Psoas muscle (tissue), 8 donors: ENCODE measurements at regions of chr1 and their contacts with region 1.

Region 1: GRCh38 chr1:176577646-176578197 is 114.7 kb downstream of the PAPPA2 start:
- DNase-seq: no peak
- ATAC-seq: no peak
- H3K4me3 ChIP-seq: no peak overlapping the region
- H3K27ac ChIP-seq: no peak overlapping the region
- H3K4me1 ChIP-seq: no peaks in the 10 kb centered on the region
- H3K27me3 ChIP-seq: no peaks in the 10 kb centered on the region
- CTCF ChIP-seq: no peak

Region 2: DNA sequence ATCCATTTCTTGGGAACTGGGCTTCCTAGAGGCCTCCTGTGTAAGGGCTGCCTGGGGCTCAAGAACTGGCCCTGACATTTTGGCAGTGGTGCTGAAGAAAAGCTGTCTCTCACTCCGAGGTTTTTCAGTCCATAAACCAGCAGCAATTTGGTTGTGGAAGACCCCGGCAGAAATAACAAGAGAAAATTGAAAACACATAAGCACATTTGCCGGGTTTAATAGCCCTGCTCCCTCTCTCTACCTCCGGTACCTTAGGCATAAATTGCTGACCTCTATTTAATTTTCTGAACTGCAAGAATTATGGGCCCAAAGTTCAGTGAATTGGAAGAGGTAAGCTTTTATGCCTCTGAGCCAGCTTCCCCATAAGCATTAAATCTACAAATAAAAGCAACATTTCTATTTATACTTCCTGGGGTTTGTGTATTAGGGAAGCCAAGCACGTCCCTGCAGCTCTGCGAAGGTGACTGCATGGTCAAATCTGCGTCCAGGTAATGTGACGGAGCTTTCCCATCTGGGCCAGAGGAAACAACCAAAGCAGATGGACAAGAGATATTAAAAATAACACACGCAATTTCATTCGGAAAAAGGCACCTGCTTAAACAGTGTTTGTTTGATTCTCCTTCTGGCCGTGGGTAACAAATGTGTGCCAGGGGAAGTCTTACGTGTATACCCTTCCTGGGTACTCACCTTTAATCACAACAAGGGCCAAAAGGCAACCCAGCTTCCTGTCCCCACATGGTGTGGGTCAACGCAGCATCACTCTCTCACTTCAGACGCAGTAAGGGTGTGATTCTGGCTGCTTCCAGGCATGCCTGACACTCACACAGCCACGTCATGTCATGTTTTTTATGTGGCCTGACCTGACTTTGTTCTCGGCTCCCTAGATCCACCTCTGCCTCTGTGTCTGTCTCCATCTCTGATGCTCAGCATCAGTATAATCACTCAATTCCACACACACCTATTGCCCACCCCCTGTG is 45.5 kb before region 1 on chr1:
- intact Hi-C with region 1: loop called in 1 of 2 experiments (anchors 1 kb)
- DNase-seq: no peak
- ATAC-seq: no peak
- H3K4me3 ChIP-seq: no peak overlapping the region
- H3K27ac ChIP-seq: no peak overlapping the region
- H3K4me1 ChIP-seq: no peaks in the 10 kb centered on the region
- H3K27me3 ChIP-seq: no peaks in the 10 kb centered on the region
- CTCF ChIP-seq: no peak

Region 3: DNA sequence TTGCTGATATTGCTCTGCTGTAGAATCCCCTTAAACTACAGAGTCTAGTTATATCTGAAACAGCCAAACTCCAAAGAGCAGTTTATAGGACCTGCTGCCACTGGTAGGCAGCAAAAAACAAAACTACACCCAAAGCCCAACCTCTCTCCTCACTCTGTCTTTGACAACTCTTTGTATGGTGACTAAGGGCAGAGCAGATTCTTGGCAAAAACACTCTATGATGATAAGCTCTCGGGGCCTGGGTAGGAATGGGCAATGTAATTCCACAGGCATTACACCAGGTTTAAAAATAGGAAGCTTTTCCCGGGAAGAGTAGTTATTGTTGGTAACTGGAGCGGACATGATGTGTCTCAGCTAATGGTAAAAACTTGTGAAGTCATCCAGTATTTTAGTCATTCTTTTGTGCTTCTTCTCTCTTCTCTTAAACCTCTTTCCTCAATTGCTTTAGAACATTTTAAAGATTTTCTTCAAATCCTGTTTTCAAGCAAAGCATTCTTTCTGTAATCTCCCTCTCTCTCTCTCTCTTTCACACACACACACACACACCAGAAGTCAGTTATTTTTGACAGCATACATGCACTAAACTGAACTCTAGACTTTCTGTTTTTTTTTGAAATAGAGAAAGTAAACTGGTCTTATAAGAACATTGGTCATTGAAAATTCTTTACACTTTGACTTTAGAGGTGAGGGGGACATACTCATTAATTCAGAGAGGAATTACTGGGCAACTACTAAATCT is 78.7 kb after region 1 on chr1:
- intact Hi-C with region 1: loop called in 1 of 2 experiments (anchors 1 kb)
- DNase-seq: no peak
- ATAC-seq: peak; percentile 97 to 99 (median 98)
- H3K4me3 ChIP-seq: no peak overlapping the region
- H3K27ac ChIP-seq: peak overlapping the region; percentile 72
- H3K4me1 ChIP-seq: no peaks in the 10 kb centered on the region
- H3K27me3 ChIP-seq: no peaks in the 10 kb centered on the region
- CTCF ChIP-seq: peak; percentile 35